ENCODE measurements at regions of chr2 and their contacts with region 1.

Region 1: DNA sequence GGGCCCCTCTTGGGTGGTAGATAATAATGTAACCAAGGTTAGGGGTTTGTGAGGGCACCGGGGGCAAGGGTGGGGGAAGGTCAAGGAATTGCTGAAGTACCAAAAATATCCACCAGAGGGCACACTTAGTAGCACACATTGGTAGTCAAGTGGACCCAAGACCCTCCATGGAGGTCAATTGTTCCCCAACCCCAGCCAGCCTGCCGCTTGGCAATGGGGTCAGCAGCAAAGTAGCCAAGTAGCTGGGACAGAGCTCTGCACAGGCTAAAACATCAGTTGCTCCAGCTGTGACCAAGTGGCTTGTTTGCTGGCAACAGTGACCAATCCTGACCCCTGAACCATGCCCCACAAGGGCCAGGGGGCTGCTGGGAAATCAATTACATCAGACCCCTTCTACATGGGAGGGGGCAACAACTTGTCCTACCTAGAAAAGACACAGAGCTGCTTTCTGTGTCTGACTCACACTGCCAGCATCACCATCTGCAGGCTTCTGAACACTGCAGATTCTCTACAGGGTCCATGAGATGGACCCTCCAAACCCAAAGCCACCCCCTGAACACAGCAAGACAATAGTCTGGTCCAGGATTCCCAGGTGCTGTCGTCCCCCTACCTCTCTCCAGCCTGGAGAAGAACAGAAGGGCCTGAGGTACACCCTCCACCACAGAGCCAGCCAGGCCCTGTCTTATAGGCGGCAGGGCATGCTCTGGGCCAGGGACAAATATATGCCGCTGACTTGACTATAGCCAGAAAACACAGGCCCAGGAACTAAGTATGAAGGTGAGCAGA is 76.0 kb downstream of the EMX1 start:
- DNase-seq: peak; percentile 37
- H3K4me3 Mint-ChIP-seq: no peak overlapping the region
- H3K27ac Mint-ChIP-seq: no peak overlapping the region
- H3K4me1 Mint-ChIP-seq: no peaks in the 10 kb centered on the region
- H3K27me3 Mint-ChIP-seq: no peaks in the 10 kb centered on the region

Region 2: GRCh38 chr2:73163483-73164367 is 170.4 kb after region 1 on chr2:
- CTCF ChIA-PET with region 1: interaction called, 15 read pairs
- POLR2A ChIA-PET with region 1: interaction called, 3 read pairs
- DNase-seq: peak; percentile 71
- H3K4me3 Mint-ChIP-seq: no peak overlapping the region
- H3K27ac Mint-ChIP-seq: no peak overlapping the region
- H3K4me1 Mint-ChIP-seq: no peaks in the 10 kb centered on the region
- H3K27me3 Mint-ChIP-seq: peaks cover 5% of the 10 kb centered on the region

Region 3: GRCh38 chr2:73202156-73203054 is 209.1 kb after region 1 on chr2 and contains the start of gene NOTO:
- CTCF ChIA-PET with region 1: no interaction called
- POLR2A ChIA-PET with region 1: no interaction called
- DNase-seq: no peak
- H3K4me3 Mint-ChIP-seq: no peak within 1 kb of the TSS
- H3K27ac Mint-ChIP-seq: no peak within 1 kb of the TSS
- H3K4me1 Mint-ChIP-seq: peaks cover 3% of the 10 kb centered on the region
- H3K27me3 Mint-ChIP-seq: peaks cover 53% of the 10 kb centered on the region
- total RNA-seq, gene NOTO: not detected